Natural killer cell (primary cell): ENCODE measurements at regions of chr6 and their contacts with region 1.

Region 1: GRCh38 chr6:153023977-153024708 is 21.6 kb upstream of the MTRF1L start:
- DNase-seq: peak in 1 of 2 donors; percentile 80
- ATAC-seq: peak; percentile 82 to 91 (median 82)
- H3K4me3 ChIP-seq: no peak overlapping the region
- H3K4me3 Mint-ChIP-seq: no peak overlapping the region
- H3K27ac ChIP-seq: no peak overlapping the region
- H3K27ac Mint-ChIP-seq: no peak overlapping the region
- H3K4me1 ChIP-seq: no peaks in the 10 kb centered on the region
- H3K4me1 Mint-ChIP-seq: peaks cover 0 to 6% of the 10 kb centered on the region in 2 donors
- H3K27me3 ChIP-seq: no peaks in the 10 kb centered on the region
- H3K27me3 Mint-ChIP-seq: peaks cover 0 to 9% of the 10 kb centered on the region in 2 donors
- CTCF ChIP-seq: peak; percentile 76

Region 2: DNA sequence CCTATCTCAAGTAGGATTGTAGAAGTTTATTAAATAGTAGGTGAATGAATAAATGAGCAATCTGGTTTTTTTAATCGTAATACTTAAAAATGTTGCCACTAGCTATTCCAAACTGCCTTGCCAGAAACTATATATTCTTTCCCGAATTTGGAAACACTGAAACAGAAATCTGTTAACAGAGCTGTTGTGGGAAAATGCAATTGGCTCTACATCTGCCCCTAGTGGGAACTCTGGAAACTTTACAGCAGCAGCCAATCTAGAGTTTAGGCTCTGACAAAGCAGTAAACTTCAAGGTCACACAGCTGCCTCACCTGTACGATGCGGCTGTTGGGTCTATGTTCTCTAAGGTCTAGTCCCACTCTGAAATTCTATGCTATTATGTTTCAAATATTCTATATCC is 428.6 kb before region 1 on chr6:
- intact Hi-C with region 1: no loop called
- DNase-seq: no peak
- ATAC-seq: peak in 1 of 3 donors; percentile 54
- H3K4me3 ChIP-seq: no peak overlapping the region
- H3K4me3 Mint-ChIP-seq: no peak overlapping the region
- H3K27ac ChIP-seq: no peak overlapping the region
- H3K27ac Mint-ChIP-seq: peak overlapping the region in 1 of 2 donors; percentile 7
- H3K4me1 ChIP-seq: no peaks in the 10 kb centered on the region
- H3K4me1 Mint-ChIP-seq: peaks cover 69 to 70% of the 10 kb centered on the region in 2 donors
- H3K27me3 ChIP-seq: no peaks in the 10 kb centered on the region
- H3K27me3 Mint-ChIP-seq: no peaks in the 10 kb centered on the region
- CTCF ChIP-seq: no peak

Region 3: DNA sequence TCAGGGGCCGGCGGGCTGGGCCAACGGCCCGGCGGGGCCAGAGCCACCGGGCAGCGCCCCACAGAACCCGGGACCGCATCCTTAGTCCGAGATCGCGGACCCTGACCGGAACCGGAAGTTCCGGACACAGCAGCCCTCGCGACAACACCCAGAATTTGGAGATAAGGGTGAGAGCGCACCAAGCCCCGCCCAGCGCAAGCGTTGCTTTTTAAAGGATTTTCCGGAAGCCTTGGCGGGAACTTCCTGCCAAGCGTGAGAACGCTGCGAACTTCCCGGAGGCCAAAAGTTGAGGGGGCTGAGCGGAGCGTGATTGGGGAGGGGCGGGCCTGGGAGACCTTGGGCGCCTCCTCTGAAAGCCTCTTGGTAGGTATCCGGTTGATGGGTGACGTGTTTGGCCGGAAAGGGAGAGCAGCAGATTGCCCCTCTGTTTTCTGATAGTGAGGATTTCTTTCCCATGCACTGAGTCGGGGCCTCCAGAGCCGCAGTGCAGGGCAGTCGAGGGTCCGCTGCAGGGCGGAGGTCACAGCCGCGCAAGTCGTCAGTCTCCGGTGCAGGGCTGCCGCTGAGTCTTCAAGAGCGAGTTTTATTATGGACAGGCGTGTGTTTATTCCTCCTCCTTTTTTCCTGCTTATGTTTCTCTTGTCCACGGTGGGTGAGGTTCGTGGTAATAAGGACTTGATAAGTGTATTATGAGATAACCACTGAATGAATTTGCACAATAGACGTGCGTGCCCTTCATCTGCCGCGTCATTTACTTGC is 21.4 kb before region 1 on chr6 and contains the start of gene MTRF1L:
- intact Hi-C with region 1: loop called (anchors 2 kb)
- DNase-seq: peak; percentile 74 to 92
- ATAC-seq: peak; percentile 86 to 94 (median 89)
- H3K4me3 ChIP-seq: peak within 1 kb of the TSS; percentile 92
- H3K4me3 Mint-ChIP-seq: peak within 1 kb of the TSS; percentile 98
- H3K27ac ChIP-seq: peak within 1 kb of the TSS; percentile 86
- H3K27ac Mint-ChIP-seq: peak within 1 kb of the TSS; percentile 90 to 97
- H3K4me1 ChIP-seq: peaks cover 18% of the 10 kb centered on the region
- H3K4me1 Mint-ChIP-seq: peaks cover 42 to 43% of the 10 kb centered on the region in 2 donors
- H3K27me3 ChIP-seq: no peaks in the 10 kb centered on the region
- H3K27me3 Mint-ChIP-seq: no peaks in the 10 kb centered on the region
- CTCF ChIP-seq: no peak
- total RNA-seq, gene MTRF1L: 17.6 to 24.7 (median 21.6) TPM